ENCODE measurements at regions of chr16 and their contacts with region 1.

Region 1: GRCh38 chr16:9008601-9009260 is 45.0 kb upstream of the USP7 start:
- DNase-seq: peak; percentile 65
- ATAC-seq: peak; percentile 99
- H3K4me3 ChIP-seq: peak overlapping the region; percentile 42; the same call in 1 of the 2 replicates
- H3K27ac ChIP-seq: no peak overlapping the region
- H3K4me1 ChIP-seq: no peaks in the 10 kb centered on the region
- H3K27me3 ChIP-seq: no peaks in the 10 kb centered on the region
- CTCF ChIP-seq: peak; percentile 81

Region 2: DNA sequence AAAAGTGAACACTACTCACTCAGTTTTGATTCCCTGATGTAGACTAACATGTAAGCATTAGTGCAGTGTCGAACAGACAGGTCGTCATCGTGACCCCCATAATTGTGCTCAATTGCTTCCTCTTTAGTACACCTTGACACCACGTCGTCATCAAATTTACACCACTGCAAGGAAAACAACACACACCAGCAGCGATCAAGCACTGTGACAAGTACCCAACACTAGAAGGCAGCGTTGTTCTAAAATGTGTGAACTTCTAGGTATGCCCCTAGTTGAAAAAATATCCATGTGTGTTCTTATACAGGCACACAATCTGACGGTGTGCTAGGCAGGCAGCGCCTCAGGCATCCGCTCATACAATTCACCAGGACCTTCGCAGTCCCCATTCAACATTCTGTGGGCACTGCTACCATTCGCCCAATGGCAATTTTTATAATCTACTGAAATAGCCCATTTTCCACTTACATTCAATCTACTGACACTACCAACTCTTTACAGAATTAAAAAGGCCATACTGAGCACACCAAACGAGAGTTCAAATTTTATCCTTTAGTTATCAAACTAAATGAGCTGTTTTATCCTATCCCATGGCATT is 103.5 kb before region 1 on chr16:
- CTCF ChIA-PET with region 1: no interaction called
- POLR2A ChIA-PET with region 1: no interaction called
- intact Hi-C with region 1: loop called (anchors 5 kb)
- DNase-seq: peak; percentile 29
- ATAC-seq: peak; percentile 37; the same call in 1 of the 2 replicates
- H3K4me3 ChIP-seq: no peak overlapping the region
- H3K27ac ChIP-seq: no peak overlapping the region
- H3K4me1 ChIP-seq: no peaks in the 10 kb centered on the region
- H3K27me3 ChIP-seq: no peaks in the 10 kb centered on the region
- CTCF ChIP-seq: 0 out of 2 replicates have a peak, but pooled peaks have one; percentile 46

Region 3: DNA sequence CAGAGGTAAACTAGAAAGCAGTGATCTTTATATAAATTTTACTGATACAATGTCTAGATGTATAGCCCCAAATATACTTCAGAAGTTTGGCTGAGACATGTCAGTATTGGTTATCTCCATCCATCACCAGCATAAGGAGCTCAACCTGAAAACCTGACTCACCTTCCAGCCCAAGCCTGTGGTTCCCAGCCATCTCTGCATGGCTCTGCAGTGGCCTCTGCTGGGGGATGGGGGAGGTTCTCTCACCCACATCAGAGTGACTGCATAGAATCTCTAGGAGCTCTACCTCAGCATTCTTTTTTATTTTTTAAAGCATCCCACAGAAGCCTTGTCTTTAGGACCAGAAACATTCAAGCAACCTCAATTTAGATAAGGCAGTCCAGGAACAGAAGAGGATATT is 72.3 kb before region 1 on chr16:
- CTCF ChIA-PET with region 1: interaction called, 14 read pairs
- POLR2A ChIA-PET with region 1: no interaction called
- intact Hi-C with region 1: loop called (anchors 10 kb)
- DNase-seq: peak; percentile 71
- ATAC-seq: peak; percentile 96
- H3K4me3 ChIP-seq: no peak overlapping the region
- H3K27ac ChIP-seq: no peak overlapping the region
- H3K4me1 ChIP-seq: no peaks in the 10 kb centered on the region
- H3K27me3 ChIP-seq: no peaks in the 10 kb centered on the region
- CTCF ChIP-seq: peak; percentile 64